ENCODE measurements at regions of chr7 and their contacts with region 1.

Region 1: GRCh38 chr7:99146979-99147378 is 3.1 kb upstream of the SMURF1 start:
- DNase-seq: no peak
- ATAC-seq: no peak
- H3K4me3 ChIP-seq: no peak overlapping the region
- H3K27ac ChIP-seq: peak overlapping the region; percentile 17; the same call in 1 of the 2 replicates
- H3K4me1 ChIP-seq: 0 out of 2 replicates have a peak, but pooled peaks cover 4% of the 10 kb centered on the region
- H3K27me3 ChIP-seq: no peaks in the 10 kb centered on the region
- CTCF ChIP-seq: no peak

Region 2: GRCh38 chr7:99109108-99110051 is 37.6 kb before region 1 on chr7:
- CTCF ChIA-PET with region 1: no interaction called
- POLR2A ChIA-PET with region 1: interaction called, 11 read pairs
- in situ Hi-C with region 1: no loop called
- intact Hi-C with region 1: no loop called
- DNase-seq: no peak
- ATAC-seq: peak; percentile 65
- H3K4me3 ChIP-seq: 0 out of 4 replicates have a peak overlapping the region, but pooled peaks of 1 of the 2 experiments have one; percentile 2
- H3K27ac ChIP-seq: peak overlapping the region; percentile 74
- H3K4me1 ChIP-seq: peaks cover 85% of the 10 kb centered on the region
- H3K27me3 ChIP-seq: no peaks in the 10 kb centered on the region
- CTCF ChIP-seq: no peak

Region 3: DNA sequence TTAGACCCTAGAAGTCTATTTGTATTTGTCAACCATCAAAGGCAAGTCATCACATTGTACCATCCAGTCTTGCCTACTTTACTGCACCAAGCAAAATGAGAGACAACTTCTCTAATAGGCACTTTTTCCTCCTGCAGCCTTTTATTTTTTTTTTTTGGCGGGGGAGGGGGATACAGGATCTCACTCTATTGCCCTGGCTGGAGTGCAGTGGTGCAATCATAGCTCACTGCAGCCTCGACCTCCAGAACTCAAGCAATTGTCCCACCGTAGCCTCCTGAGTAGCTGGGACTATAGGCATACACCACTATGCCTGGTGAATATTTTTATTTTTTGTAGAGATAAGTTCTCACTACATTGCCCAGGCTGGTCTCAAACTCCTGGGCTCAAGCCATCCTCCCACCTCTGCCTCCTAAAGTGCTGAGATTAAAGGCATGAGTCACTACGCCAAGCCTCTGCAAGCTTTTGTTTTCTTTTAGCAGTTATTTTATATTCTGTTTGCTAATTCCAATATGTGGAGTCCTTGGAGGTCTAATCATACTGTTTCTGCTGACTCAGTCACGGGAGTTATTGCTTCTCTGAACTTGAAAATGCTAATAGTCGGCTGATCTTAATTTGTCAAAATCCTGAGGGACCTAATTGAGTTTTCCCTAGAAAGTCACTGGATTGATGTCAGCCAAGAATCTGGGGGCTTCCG is 46.7 kb after region 1 on chr7:
- CTCF ChIA-PET with region 1: interaction called, 10 read pairs
- POLR2A ChIA-PET with region 1: no interaction called
- in situ Hi-C with region 1: no loop called
- intact Hi-C with region 1: no loop called
- DNase-seq: no peak
- ATAC-seq: peak; percentile 78
- H3K4me3 ChIP-seq: no peak overlapping the region
- H3K27ac ChIP-seq: peak overlapping the region; percentile 41
- H3K4me1 ChIP-seq: peaks cover 12% of the 10 kb centered on the region
- H3K27me3 ChIP-seq: no peaks in the 10 kb centered on the region
- CTCF ChIP-seq: no peak

Region 4: DNA sequence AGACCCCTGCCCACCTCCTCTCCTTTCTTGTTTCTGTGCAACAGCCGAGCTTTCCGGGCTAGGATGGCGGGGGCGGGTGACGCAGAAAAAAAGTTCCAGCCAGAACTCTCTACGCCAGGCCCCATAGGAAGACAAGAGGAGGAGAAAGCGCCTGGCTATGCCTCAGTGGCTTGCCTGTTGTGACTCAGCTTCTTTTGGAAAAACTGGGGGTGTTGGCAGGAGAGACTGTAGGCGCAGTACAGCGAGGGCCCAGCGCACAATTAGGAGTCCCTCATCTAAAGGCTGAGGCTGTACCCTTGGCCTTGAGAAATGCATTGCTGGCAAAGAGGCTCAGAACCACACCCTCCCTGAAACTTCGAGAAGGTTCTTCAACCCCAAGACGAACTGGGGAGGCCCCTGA is 88.9 kb after region 1 on chr7:
- CTCF ChIA-PET with region 1: no interaction called
- POLR2A ChIA-PET with region 1: no interaction called
- in situ Hi-C with region 1: no loop called
- intact Hi-C with region 1: no loop called
- DNase-seq: no peak
- ATAC-seq: no peak
- H3K4me3 ChIP-seq: no peak overlapping the region
- H3K27ac ChIP-seq: no peak overlapping the region
- H3K4me1 ChIP-seq: no peaks in the 10 kb centered on the region
- H3K27me3 ChIP-seq: no peaks in the 10 kb centered on the region
- CTCF ChIP-seq: no peak